Activated CD8-positive, alpha-beta T cell treated with anti-CD3 and anti-CD28 coated beads, Interleukin-2, amount 10 ng/mL, durations not matched to agents 7 days and 5 days (primary cell): ENCODE measurements at regions of chr12 and their contacts with region 1.

Region 1: GRCh38 chr12:54337280-54337842 is 12.4 kb downstream of the COPZ1 start:
- DNase-seq: no peak
- ATAC-seq: no peak
- H3K4me3 Mint-ChIP-seq: no peak overlapping the region
- H3K27ac Mint-ChIP-seq: no peak overlapping the region
- H3K4me1 Mint-ChIP-seq: peaks cover 6% of the 10 kb centered on the region
- H3K27me3 Mint-ChIP-seq: no peaks in the 10 kb centered on the region

Region 2: GRCh38 chr12:54273981-54274380 is 63.4 kb before region 1 on chr12:
- CTCF ChIA-PET with region 1: no interaction called
- POLR2A ChIA-PET with region 1: no interaction called
- DNase-seq: no peak
- ATAC-seq: no peak
- H3K4me3 Mint-ChIP-seq: no peak overlapping the region
- H3K27ac Mint-ChIP-seq: no peak overlapping the region
- H3K4me1 Mint-ChIP-seq: peaks cover 41% of the 10 kb centered on the region
- H3K27me3 Mint-ChIP-seq: no peaks in the 10 kb centered on the region

Region 3: GRCh38 chr12:54287261-54288157 is 49.9 kb before region 1 on chr12:
- CTCF ChIA-PET with region 1: interaction called, 33 read pairs
- POLR2A ChIA-PET with region 1: interaction called, 10 read pairs
- DNase-seq: no peak
- ATAC-seq: no peak
- H3K4me3 Mint-ChIP-seq: no peak overlapping the region
- H3K27ac Mint-ChIP-seq: no peak overlapping the region
- H3K4me1 Mint-ChIP-seq: peaks cover 43% of the 10 kb centered on the region
- H3K27me3 Mint-ChIP-seq: no peaks in the 10 kb centered on the region

Region 4: DNA sequence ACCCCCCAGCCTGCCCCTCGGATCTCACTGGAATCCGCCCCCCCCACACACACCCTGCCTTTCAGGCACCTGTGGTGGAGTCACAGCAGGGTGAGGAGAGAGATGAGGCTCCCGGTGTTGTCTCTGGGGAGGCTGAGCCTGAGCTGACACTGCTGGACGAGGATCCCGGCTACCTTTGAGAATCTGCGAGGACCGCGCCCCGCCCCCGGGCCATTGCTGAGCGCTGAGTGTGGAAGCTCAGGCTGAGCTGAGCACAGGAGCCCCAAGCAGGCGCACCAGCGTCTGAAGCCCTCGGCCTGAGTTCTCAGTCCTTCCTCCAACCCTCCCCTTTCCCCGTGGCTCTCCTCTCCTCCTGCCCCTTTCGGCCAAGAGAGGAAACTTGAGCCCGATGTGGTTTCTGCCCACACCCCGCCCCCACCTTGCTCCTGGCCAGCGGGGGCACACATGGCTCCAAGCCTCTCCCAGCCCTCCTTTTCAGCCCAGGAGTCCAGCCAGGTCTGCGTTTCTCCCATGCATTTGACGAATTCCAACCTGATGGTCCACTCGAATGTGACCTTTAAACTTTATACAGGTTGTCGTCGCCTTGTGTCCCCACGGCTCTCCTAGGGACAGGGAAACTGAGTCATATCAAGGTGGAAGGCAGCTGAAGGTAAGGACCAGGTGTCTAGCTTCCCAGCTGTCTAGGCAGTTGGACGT is 36.5 kb before region 1 on chr12 and contains the start of gene NFE2:
- CTCF ChIA-PET with region 1: interaction called, 33 read pairs
- POLR2A ChIA-PET with region 1: no interaction called
- DNase-seq: peak; percentile 35
- ATAC-seq: peak; percentile 64
- H3K4me3 Mint-ChIP-seq: no peak within 1 kb of the TSS
- H3K27ac Mint-ChIP-seq: no peak within 1 kb of the TSS
- H3K4me1 Mint-ChIP-seq: peaks cover 37% of the 10 kb centered on the region
- H3K27me3 Mint-ChIP-seq: peaks cover 67% of the 10 kb centered on the region
- total RNA-seq, gene NFE2: not detected

Region 5: DNA sequence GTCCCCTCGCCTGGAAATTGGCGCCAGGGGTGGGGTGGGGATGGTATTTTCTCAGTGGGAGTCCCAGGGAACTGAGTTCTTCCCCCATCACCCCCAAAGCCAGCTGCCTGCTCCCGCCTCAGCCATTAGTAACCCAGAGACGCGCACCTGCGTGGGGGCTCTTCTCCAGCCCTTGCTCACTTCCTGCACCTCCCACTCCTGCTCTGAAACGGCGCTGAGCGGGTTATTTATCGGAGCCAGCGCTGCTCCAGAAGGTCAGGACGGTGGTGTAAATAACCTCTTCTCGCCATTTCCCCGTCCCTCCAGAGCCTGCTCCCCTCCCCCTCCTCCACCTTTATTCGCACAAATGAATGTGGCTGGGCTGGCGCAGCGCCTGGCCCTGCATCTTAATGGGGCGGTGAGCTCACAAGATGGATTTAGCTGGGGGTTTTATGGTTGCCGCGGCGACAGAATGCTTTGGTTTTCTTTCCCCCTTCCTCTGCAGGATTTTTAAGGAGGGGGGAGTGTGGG is 14.7 kb after region 1 on chr12:
- CTCF ChIA-PET with region 1: interaction called, 96 read pairs
- POLR2A ChIA-PET with region 1: no interaction called
- DNase-seq: peak; percentile 32
- ATAC-seq: peak; percentile 62
- H3K4me3 Mint-ChIP-seq: peak overlapping the region; percentile 26
- H3K27ac Mint-ChIP-seq: no peak overlapping the region
- H3K4me1 Mint-ChIP-seq: peaks cover 22% of the 10 kb centered on the region
- H3K27me3 Mint-ChIP-seq: no peaks in the 10 kb centered on the region

Region 6: GRCh38 chr12:54368709-54369583 is 31.6 kb after region 1 on chr12:
- CTCF ChIA-PET with region 1: interaction called, 59 read pairs
- POLR2A ChIA-PET with region 1: no interaction called
- DNase-seq: peak; percentile 93
- ATAC-seq: peak; percentile 89
- H3K4me3 Mint-ChIP-seq: no peak overlapping the region
- H3K27ac Mint-ChIP-seq: peak overlapping the region; percentile 32
- H3K4me1 Mint-ChIP-seq: peaks cover 52% of the 10 kb centered on the region
- H3K27me3 Mint-ChIP-seq: peaks cover 4% of the 10 kb centered on the region